ENCODE measurements at regions of chr14 and their contacts with region 1.

Region 1: DNA sequence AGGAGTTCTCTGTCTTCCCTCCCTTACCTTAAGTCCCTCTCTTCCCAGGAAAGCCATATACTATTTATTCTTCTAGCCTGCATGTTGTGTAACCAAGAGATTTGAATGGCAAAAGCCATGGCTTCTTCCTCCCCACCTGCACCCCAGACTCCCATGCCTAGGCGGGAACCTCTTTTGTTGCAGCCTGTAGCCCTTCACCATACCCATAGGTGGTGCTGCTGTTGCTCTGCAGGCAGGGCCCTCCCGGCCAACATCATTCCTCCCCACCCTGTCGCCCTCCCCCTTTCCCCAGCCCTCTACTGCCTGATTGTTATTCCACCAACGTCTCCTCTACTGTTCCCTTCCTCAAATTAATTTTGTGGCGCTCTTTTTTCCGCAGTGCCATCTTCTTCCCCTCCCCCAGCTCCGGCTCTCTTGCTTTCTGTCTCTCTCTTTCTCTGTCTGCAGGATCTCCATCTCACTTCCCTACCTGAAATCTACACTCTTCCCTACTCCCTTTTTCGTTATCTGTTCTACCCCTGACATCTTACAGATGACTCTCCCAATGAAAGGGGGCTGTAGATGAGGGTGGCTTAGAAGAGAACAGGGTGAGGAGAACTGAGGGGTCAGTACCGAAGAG is 13.8 kb downstream of the NGDN start:
- DNase-seq: peak; percentile 40 to 60
- ATAC-seq: peak; percentile 79 to 96
- H3K4me3 ChIP-seq: no peak overlapping the region
- H3K27ac ChIP-seq: no peak overlapping the region
- H3K4me1 ChIP-seq: no peaks in the 10 kb centered on the region
- CTCF ChIP-seq: peak; percentile 34; the same call in 2 of the 3 replicates
- EP300 ChIP-seq: no peak
- POLR2A ChIP-seq: no peak
- RAD21 ChIP-seq: peak in 1 of 2 experiments; percentile 67; a peak in 3 of 5 replicates

Region 2: GRCh38 chr14:23494223-23494622 is 10.9 kb after region 1 on chr14:
- CTCF ChIA-PET with region 1: interaction called, 39 read pairs
- POLR2A ChIA-PET with region 1: no interaction called
- DNase-seq: no peak
- ATAC-seq: no peak
- H3K4me3 ChIP-seq: no peak overlapping the region
- H3K27ac ChIP-seq: no peak overlapping the region
- H3K4me1 ChIP-seq: no peaks in the 10 kb centered on the region
- CTCF ChIP-seq: no peak
- EP300 ChIP-seq: no peak
- POLR2A ChIP-seq: no peak
- RAD21 ChIP-seq: no peak

Region 3: DNA sequence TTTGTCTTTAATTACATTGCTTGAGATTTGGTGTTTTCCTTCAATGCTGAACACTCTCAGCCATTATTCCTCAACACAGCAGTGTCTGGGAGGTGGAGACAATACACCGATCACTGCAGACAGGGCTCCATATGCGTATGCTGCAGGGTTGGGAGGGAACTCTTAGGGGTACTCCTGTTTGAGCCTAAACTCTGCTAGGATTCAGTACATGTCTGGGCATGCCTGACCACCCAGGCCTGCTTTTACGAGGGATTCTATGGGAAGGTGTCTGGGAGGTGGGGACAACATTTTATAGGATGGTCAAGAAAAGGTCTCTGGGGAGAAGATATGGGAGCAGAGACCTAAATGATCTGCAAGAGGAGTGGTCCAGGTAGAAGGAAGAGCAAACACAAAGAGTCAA is 187.1 kb after region 1 on chr14:
- CTCF ChIA-PET with region 1: no interaction called
- POLR2A ChIA-PET with region 1: no interaction called
- DNase-seq: no peak
- ATAC-seq: no peak
- H3K4me3 ChIP-seq: no peak overlapping the region
- H3K27ac ChIP-seq: peak overlapping the region in 1 of 2 experiments; percentile 48; a peak in 2 of 6 replicates
- H3K4me1 ChIP-seq: no peaks in the 10 kb centered on the region
- CTCF ChIP-seq: no peak
- EP300 ChIP-seq: no peak
- POLR2A ChIP-seq: no peak
- RAD21 ChIP-seq: no peak